Right ventricle myocardium inferior (tissue), 1 donor: ENCODE measurements at regions of chr18 and their contacts with region 1.

Region 1: GRCh38 chr18:49412679-49413078 is 47.8 kb downstream of the DYM start:
- DNase-seq: no peak
- ATAC-seq: no peak

Region 2: GRCh38 chr18:49274188-49274714 is 138.4 kb before region 1 on chr18:
- intact Hi-C with region 1: loop called (anchors 10 kb)
- DNase-seq: no peak
- ATAC-seq: no peak

Region 3: GRCh38 chr18:49352321-49352720 is 60.4 kb before region 1 on chr18:
- intact Hi-C with region 1: no loop called
- DNase-seq: no peak
- ATAC-seq: no peak

Region 4: GRCh38 chr18:49467019-49467563 is 54.4 kb after region 1 on chr18:
- intact Hi-C with region 1: no loop called
- DNase-seq: no peak
- ATAC-seq: no peak